Activated CD8-positive, alpha-beta T cell treated with anti-CD3 and anti-CD28 coated beads for 36 hours (primary cell): ENCODE measurements at regions of chr11 and their contacts with region 1.

Region 1: GRCh38 chr11:123580557-123581275 is 73.7 kb downstream of the SCN3B start:
- DNase-seq: peak; percentile 72
- ATAC-seq: peak; percentile 94
- H3K4me3 Mint-ChIP-seq: no peak overlapping the region
- H3K27ac Mint-ChIP-seq: no peak overlapping the region
- H3K4me1 Mint-ChIP-seq: peaks cover 5% of the 10 kb centered on the region
- H3K27me3 Mint-ChIP-seq: peaks cover 1% of the 10 kb centered on the region
- CTCF ChIP-seq: peak; percentile 93

Region 2: DNA sequence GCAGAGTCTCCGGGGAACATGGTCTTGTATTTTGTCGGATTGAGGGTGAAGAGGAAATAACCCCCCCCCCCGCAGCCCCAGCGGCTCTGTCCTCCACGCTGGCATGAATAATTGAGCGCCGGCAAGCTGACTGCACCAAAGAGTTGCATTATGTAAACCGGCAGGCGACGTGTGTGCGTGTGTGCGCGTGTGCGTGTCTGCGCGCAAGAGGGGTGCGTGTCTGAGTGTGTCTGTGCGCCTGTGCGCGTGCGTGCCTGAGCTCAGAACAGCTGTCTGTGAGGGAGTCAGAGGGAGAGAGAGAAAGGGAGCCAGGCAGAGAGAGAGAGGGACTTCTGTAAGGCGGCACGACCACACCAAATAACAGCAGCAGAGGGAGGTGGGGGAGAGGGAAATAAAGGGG is 20.7 kb before region 1 on chr11:
- CTCF ChIA-PET with region 1: interaction called, 26 read pairs
- POLR2A ChIA-PET with region 1: no interaction called
- intact Hi-C with region 1: no loop called
- DNase-seq: peak; percentile 61
- ATAC-seq: peak; percentile 90
- H3K4me3 Mint-ChIP-seq: peak overlapping the region; percentile 50
- H3K27ac Mint-ChIP-seq: no peak overlapping the region
- H3K4me1 Mint-ChIP-seq: peaks cover 10% of the 10 kb centered on the region
- H3K27me3 Mint-ChIP-seq: peaks cover 3% of the 10 kb centered on the region
- CTCF ChIP-seq: no peak

Region 3: DNA sequence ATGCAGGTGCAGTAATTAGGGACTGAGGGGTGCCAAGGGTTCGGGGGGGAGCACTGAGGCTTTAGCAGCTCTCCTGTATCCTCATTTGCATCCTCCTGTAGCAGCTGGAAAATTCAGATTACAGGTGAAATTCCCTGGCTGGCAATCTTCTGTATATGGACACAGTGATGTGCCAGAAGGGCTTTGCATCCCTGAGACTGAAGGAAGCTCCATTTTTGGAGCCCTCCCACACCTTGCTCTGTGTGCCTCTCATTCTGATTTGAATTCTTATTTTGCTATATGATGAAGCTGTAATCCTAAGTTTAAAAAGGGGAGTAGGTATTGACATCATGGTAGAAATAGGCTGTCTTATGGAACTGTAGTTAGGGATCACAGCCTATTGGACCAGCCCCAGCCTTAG is 27.1 kb after region 1 on chr11:
- CTCF ChIA-PET with region 1: interaction called, 10 read pairs
- POLR2A ChIA-PET with region 1: no interaction called
- intact Hi-C with region 1: no loop called
- DNase-seq: no peak
- ATAC-seq: no peak
- H3K4me3 Mint-ChIP-seq: no peak overlapping the region
- H3K27ac Mint-ChIP-seq: no peak overlapping the region
- H3K4me1 Mint-ChIP-seq: no peaks in the 10 kb centered on the region
- H3K27me3 Mint-ChIP-seq: no peaks in the 10 kb centered on the region
- CTCF ChIP-seq: no peak

Region 4: DNA sequence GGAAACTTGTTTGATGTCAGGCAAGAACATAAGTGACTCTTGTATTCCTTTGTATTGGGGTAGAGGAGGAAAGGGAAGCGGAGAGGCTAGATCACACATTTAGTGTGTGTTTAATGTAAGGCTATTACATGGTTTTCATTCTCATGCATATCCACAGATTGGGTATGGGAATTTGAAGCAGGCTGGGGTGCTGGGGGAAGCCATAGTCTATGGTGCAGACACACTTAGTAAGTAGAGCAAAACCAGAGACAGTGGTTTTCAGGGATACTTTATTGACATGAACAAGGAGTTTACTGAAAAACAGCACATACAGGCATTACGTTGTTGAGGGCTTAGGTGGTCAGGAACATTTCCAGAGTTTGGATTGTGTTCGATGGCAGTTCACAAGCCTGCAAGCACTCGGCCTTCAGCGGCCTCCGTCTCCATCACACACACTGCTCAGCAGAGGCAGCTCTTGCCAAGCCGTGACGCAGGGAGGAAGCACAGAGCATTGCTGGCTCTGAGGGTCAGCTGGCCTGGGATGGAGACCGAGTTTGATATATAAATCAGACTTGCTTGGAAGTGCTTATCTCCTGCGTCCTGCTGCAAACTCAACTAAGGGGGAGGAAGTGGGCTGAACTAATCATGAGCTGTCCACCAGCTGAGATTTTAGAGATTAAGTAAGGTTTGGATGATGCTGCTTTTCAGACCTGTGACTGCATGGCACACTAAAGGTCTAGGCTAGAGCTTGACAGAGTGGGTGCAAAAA is 48.4 kb after region 1 on chr11:
- CTCF ChIA-PET with region 1: no interaction called
- POLR2A ChIA-PET with region 1: no interaction called
- intact Hi-C with region 1: no loop called
- DNase-seq: no peak
- ATAC-seq: no peak
- H3K4me3 Mint-ChIP-seq: no peak overlapping the region
- H3K27ac Mint-ChIP-seq: no peak overlapping the region
- H3K4me1 Mint-ChIP-seq: peaks cover 2% of the 10 kb centered on the region
- H3K27me3 Mint-ChIP-seq: peaks cover 4% of the 10 kb centered on the region
- CTCF ChIP-seq: no peak

Region 5: DNA sequence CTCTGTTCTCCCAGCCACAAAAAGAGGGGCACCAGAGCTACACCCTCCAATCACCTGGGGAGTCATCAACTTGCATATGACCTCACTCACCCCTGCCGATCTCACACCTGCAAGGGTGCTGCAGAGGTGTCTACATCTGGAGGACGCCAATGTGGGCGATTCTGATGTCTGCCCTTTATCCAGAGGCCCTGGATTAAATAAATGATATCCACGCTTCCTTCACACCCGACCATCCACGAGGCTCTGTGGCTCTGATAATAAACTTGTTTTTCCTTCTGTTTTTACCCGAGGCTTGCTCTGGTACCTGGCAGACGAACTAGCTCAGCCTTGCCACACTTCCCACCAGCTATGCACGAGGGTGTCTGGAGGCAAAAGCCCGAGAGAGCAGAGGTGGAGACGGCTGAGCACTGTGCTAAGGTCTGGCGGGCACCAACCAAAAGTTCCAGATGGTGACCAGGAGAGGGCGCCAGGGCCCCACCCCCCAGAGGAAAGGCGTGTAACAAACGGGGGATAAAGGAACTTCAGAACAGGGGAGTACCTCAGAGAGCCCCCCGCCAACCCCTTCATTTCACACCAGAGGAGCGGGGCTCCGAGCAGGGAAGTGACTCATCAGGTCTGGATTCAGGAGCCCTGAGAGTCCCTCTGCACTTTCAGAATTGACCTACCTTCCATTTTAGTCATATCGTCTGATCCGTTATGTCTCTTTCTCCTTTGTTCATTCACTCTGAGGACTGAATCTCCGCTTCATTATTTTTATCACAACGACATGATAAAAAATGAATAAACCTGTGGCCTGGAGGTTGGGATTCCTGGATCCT is 60.2 kb after region 1 on chr11:
- CTCF ChIA-PET with region 1: interaction called, 11 read pairs
- POLR2A ChIA-PET with region 1: no interaction called
- intact Hi-C with region 1: no loop called
- DNase-seq: peak; percentile 67
- ATAC-seq: peak; percentile 96
- H3K4me3 Mint-ChIP-seq: no peak overlapping the region
- H3K27ac Mint-ChIP-seq: no peak overlapping the region
- H3K4me1 Mint-ChIP-seq: peaks cover 1% of the 10 kb centered on the region
- H3K27me3 Mint-ChIP-seq: peaks cover 21% of the 10 kb centered on the region
- CTCF ChIP-seq: peak; percentile 89